ENCODE measurements at regions of chr10 and their contacts with region 1.

Region 1: GRCh38 chr10:62050893-62051433 is 149.5 kb downstream of the ARID5B start:
- DNase-seq: peak; percentile 66
- H3K4me3 ChIP-seq: peak overlapping the region; percentile 94
- H3K27ac ChIP-seq: peak overlapping the region; percentile 84
- H3K27me3 ChIP-seq: no peaks in the 10 kb centered on the region
- CTCF ChIP-seq: no peak

Region 2: GRCh38 chr10:61903221-61903927 is 147.6 kb before region 1 on chr10:
- CTCF ChIA-PET with region 1: no interaction called
- POLR2A ChIA-PET with region 1: interaction called, 10 read pairs
- DNase-seq: no peak
- H3K4me3 ChIP-seq: peak overlapping the region; percentile 82
- H3K27ac ChIP-seq: peak overlapping the region; percentile 86
- H3K27me3 ChIP-seq: no peaks in the 10 kb centered on the region
- CTCF ChIP-seq: peak; percentile 18; the same call in 1 of the 2 replicates

Measured in AG04450 (cell line).